Panc1 (cell line): ENCODE measurements at regions of chr14 and their contacts with region 1.

Region 1: GRCh38 chr14:49677643-49678042 is 10.4 kb downstream of the POLE2 start:
- DNase-seq: no peak
- ATAC-seq: peak; percentile 66; the same call in 1 of the 2 replicates
- H3K4me3 ChIP-seq: no peak overlapping the region
- H3K27ac ChIP-seq: no peak overlapping the region
- H3K4me1 ChIP-seq: no peaks in the 10 kb centered on the region
- H3K27me3 ChIP-seq: no peaks in the 10 kb centered on the region
- CTCF ChIP-seq: no peak

Region 2: GRCh38 chr14:50171895-50172294 is 494.3 kb after region 1 on chr14:
- CTCF ChIA-PET with region 1: no interaction called
- POLR2A ChIA-PET with region 1: interaction called, 10 read pairs
- in situ Hi-C with region 1: no loop called
- intact Hi-C with region 1: no loop called
- DNase-seq: no peak
- ATAC-seq: no peak
- H3K4me3 ChIP-seq: no peak overlapping the region
- H3K27ac ChIP-seq: no peak overlapping the region
- H3K4me1 ChIP-seq: no peaks in the 10 kb centered on the region
- H3K27me3 ChIP-seq: no peaks in the 10 kb centered on the region
- CTCF ChIP-seq: no peak